AG04450 (cell line): ENCODE measurements at regions of chr10 and their contacts with region 1.

Region 1: GRCh38 chr10:78047314-78047891 is 13.7 kb downstream of the RPS24 start:
- DNase-seq: peak; percentile 77
- H3K4me3 ChIP-seq: no peak overlapping the region
- H3K27ac ChIP-seq: no peak overlapping the region
- H3K27me3 ChIP-seq: no peaks in the 10 kb centered on the region
- CTCF ChIP-seq: peak; percentile 92

Region 2: DNA sequence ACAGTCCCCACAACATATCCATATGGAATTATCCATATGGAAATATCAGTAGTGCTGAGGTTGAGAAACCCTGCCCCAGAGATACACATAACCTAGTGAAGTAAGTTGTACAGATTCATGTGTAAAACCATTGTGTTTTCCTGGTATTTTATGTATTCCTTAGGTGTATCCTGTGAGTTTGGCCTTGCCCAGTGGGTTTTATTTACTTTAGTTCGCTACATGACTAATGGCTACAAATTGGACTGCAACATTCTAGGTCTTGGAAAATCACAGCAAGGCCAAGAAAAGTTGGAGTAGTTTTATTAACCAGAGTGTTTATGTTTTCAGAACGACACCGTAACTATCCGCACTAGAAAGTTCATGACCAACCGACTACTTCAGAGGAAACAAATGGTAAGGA is 12.4 kb before region 1 on chr10:
- CTCF ChIA-PET with region 1: interaction called, 10 read pairs
- POLR2A ChIA-PET with region 1: interaction called, 5 read pairs
- DNase-seq: no peak
- H3K4me3 ChIP-seq: peak overlapping the region; percentile 99
- H3K27ac ChIP-seq: no peak overlapping the region
- H3K27me3 ChIP-seq: no peaks in the 10 kb centered on the region
- CTCF ChIP-seq: no peak